ENCODE measurements at regions of chr10 and their contacts with region 1.

Region 1: DNA sequence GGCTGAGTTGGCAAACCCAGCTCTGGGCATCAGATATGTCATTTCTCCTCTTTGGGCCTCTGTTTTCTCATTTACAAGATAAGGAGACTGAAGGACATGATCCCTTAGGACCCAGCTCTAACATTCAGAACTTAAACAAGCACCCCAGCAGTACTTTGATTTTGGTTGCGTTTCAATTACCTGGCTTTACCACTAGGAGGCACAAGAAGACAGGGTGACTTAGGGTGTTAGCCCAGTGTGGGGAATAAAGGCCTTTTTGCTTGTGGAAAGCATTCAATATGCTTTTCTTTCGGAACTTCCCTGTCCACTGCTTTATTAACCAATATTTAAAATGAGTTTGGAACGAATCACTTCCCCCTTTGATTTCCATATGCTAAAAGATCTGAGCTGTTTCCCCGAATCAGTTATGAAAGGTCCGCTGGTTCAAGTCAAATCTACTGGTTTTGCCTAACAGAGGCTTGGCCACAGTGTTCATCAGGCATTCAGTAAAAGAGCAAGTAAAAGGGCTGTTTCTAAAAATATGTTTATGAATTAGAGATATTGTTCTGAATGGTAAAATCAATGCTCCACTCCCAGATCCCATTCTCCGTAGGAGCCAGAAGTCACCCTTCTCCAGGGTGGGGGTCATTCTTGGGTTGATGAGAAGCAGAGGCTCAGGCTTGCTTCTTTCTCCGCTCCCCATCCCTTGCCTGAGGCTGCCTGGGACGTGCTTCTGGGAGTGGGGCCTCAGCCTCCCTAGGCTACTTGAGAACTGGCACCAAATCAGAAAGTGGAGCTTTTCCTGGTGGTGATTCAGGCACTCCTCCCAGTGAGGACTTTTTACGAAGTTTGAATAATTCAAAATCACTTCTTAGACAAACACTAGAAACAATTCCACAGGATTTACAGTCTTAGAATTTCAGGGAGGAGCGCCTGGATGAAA is 105.5 kb downstream of the MYOF start:
- DNase-seq: peak in 6 of 7 donors; percentile 45 to 64 (median 58)
- H3K4me3 ChIP-seq: no peak overlapping the region
- H3K27ac ChIP-seq: peak overlapping the region in 2 of 5 donors; percentile 33 to 76
- H3K4me1 ChIP-seq: peaks cover 0 to 9% of the 10 kb centered on the region in 2 donors
- H3K27me3 ChIP-seq: no peaks in the 10 kb centered on the region
- CTCF ChIP-seq: peak; percentile 85 to 98 (median 96)
- POLR2A ChIP-seq: no peak

Region 2: GRCh38 chr10:93299606-93300287 is 76.9 kb before region 1 on chr10:
- intact Hi-C with region 1: no loop called
- DNase-seq: no peak
- H3K4me3 ChIP-seq: no peak overlapping the region
- H3K27ac ChIP-seq: no peak overlapping the region
- H3K4me1 ChIP-seq: no peaks in the 10 kb centered on the region
- H3K27me3 ChIP-seq: no peaks in the 10 kb centered on the region
- CTCF ChIP-seq: no peak
- POLR2A ChIP-seq: no peak

Region 3: GRCh38 chr10:93482145-93482834 is 105.7 kb after region 1 on chr10 and contains the start of gene MYOF:
- intact Hi-C with region 1: loop called (anchors 2 to 5 kb)
- DNase-seq: peak; percentile 57 to 84 (median 69)
- H3K4me3 ChIP-seq: peak within 1 kb of the TSS; percentile 5 to 69 (median 31)
- H3K27ac ChIP-seq: peak within 1 kb of the TSS; percentile 19 to 94 (median 90)
- H3K4me1 ChIP-seq: peaks cover 0 to 11% of the 10 kb centered on the region in 2 donors
- H3K27me3 ChIP-seq: no peaks in the 10 kb centered on the region
- CTCF ChIP-seq: peak; percentile 37 to 76 (median 71)
- POLR2A ChIP-seq: peak in 1 of 2 donors; percentile 79
- total RNA-seq, gene MYOF: 4.1 to 119 (median 54.4) TPM

Region 4: DNA sequence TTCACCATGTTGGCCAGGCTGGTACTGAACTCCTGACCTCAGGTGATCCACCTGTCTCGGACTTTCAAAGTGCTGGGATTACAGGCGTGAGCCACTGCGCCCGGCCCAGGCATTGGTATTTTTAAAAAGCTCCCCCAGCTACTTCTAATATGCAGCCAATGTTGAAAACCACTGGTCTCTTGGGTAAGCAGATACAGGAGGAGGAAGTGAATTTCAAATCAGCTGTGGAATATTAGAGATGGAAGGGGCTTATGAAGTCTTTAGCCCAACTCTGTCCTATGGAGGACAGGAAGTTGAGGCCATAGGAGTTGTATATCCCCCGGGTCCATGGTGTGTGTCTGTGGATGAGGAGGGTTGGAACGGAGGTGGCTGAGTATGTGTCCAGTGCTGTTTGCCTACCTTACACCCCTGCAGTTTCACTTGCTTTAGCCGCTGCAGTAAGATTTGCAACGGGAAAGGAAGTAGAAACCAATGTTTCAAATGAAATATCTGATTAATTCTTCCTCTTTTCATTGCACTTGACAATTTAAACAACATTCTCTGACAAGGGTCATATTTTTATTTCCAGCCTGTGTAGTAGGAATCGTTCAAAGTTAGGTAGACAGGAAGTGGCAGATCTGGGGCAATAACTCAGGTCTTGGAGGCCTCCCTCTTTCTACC is 239.1 kb after region 1 on chr10:
- intact Hi-C with region 1: no loop called
- DNase-seq: no peak
- H3K4me3 ChIP-seq: no peak overlapping the region
- H3K27ac ChIP-seq: peak overlapping the region in 2 of 5 donors; percentile 12 to 58
- H3K4me1 ChIP-seq: no peaks in the 10 kb centered on the region
- H3K27me3 ChIP-seq: no peaks in the 10 kb centered on the region
- CTCF ChIP-seq: no peak
- POLR2A ChIP-seq: no peak

Measured in adrenal gland (tissue), 19 donors.